K562 (cell line): ENCODE measurements at regions of chr3 and their contacts with region 1.

Region 1: GRCh38 chr3:28667646-28668621 is 319.3 kb upstream of the AZI2 start:
- DNase-seq: peak; percentile 42 to 66 (median 55)
- ATAC-seq: peak; percentile 91
- H3K4me3 ChIP-seq: no peak overlapping the region
- H3K27ac ChIP-seq: no peak overlapping the region
- H3K4me1 ChIP-seq: no peaks in the 10 kb centered on the region
- H3K27me3 ChIP-seq: no peaks in the 10 kb centered on the region
- CTCF ChIP-seq: peak; percentile 52 to 75 (median 63)
- EP300 ChIP-seq: no peak
- POLR2A ChIP-seq: no peak
- RAD21 ChIP-seq: peak; percentile 25 to 59; a peak in 3 of 4 replicates

Region 2: GRCh38 chr3:28940530-28940929 is 272.6 kb after region 1 on chr3:
- CTCF ChIA-PET with region 1: no interaction called
- POLR2A ChIA-PET with region 1: no interaction called
- in situ Hi-C with region 1: no loop called
- intact Hi-C with region 1: no loop called
- DNase-seq: no peak
- ATAC-seq: no peak
- H3K4me3 ChIP-seq: no peak overlapping the region
- H3K27ac ChIP-seq: no peak overlapping the region
- H3K4me1 ChIP-seq: no peaks in the 10 kb centered on the region
- H3K27me3 ChIP-seq: no peaks in the 10 kb centered on the region
- CTCF ChIP-seq: no peak
- EP300 ChIP-seq: no peak
- POLR2A ChIP-seq: no peak
- RAD21 ChIP-seq: no peak

Region 3: DNA sequence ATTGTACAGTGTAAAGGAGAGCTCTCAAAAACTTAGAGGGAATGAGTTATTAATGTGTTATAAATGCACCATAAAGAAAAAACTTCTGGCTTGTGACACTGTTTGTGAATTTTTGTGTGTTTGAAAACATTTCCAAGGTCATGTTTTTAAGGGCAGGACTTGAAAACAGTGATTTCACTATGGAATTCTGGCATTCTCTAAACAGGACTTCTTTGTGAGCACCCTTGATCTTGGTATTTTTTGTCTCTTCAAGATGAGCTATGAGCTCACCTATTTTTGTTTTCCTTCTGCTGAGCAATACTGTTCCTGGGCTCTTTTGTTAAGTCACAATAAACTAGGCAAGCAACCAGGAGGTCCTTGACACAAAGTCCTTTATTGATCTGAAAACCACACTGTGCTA is 897.3 kb after region 1 on chr3:
- CTCF ChIA-PET with region 1: no interaction called
- POLR2A ChIA-PET with region 1: no interaction called
- in situ Hi-C with region 1: no loop called
- intact Hi-C with region 1: no loop called
- DNase-seq: no peak
- ATAC-seq: no peak
- H3K4me3 ChIP-seq: no peak overlapping the region
- H3K27ac ChIP-seq: no peak overlapping the region
- H3K4me1 ChIP-seq: no peaks in the 10 kb centered on the region
- H3K27me3 ChIP-seq: no peaks in the 10 kb centered on the region
- CTCF ChIP-seq: no peak
- EP300 ChIP-seq: no peak
- POLR2A ChIP-seq: no peak
- RAD21 ChIP-seq: no peak

Region 4: GRCh38 chr3:30199096-30199759 is 1531.3 kb after region 1 on chr3:
- CTCF ChIA-PET with region 1: no interaction called
- POLR2A ChIA-PET with region 1: no interaction called
- in situ Hi-C with region 1: no loop called
- intact Hi-C with region 1: loop called (anchors 1 kb)
- DNase-seq: peak; percentile 20 to 70 (median 42)
- ATAC-seq: peak; percentile 69; the same call in 2 of the 3 replicates
- H3K4me3 ChIP-seq: no peak overlapping the region
- H3K27ac ChIP-seq: no peak overlapping the region
- H3K4me1 ChIP-seq: no peaks in the 10 kb centered on the region
- H3K27me3 ChIP-seq: no peaks in the 10 kb centered on the region
- CTCF ChIP-seq: peak; percentile 42 to 70 (median 60); a peak in 5 of 6 replicates
- EP300 ChIP-seq: no peak
- POLR2A ChIP-seq: no peak
- RAD21 ChIP-seq: peak; percentile 81 to 83